Panc1 (cell line): ENCODE measurements at regions of chr2 and their contacts with region 1.

Region 1: DNA sequence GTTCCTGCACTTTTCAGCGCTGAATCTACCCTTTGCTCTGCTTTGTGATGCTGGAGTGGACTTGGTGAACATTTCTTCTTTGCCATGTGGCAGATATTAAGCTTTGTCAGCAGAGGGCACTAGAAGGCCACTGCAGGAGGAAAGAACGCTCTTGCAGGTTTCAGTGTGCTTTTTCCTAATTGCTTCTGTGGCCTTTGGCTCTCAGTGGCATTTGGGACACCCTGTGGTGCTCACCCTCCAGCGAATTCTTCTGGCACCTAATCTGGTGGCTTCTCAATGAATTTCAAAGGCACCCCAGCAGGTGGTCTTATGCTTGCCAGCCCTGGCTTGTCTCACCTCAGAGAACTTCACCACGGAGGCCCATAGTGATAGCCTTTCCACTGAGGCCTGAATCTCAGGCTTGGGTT is 146.7 kb downstream of the MYO3B start:
- DNase-seq: peak; percentile 27
- ATAC-seq: peak; percentile 87
- H3K4me3 ChIP-seq: no peak overlapping the region
- H3K27ac ChIP-seq: no peak overlapping the region
- H3K4me1 ChIP-seq: no peaks in the 10 kb centered on the region
- H3K27me3 ChIP-seq: no peaks in the 10 kb centered on the region
- CTCF ChIP-seq: peak; percentile 94

Region 2: DNA sequence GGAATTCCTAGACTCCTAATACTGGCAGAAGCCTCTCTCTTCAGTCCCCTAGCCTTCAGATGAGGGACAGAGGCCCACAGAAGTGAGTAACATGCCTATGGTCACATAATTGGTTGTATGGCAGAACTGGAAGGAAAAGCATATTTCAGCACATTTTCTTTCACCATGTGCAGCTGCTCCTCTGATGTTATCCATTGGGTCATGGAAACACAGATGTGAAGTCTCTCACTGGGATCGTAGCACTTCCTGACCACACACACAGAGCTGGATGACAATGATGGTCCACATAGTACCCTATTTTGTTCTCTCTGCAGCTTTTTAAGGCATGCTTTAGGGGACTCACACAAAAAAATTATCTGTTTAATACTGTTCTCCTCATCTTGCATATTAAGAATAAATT is 122.2 kb before region 1 on chr2:
- CTCF ChIA-PET with region 1: no interaction called
- POLR2A ChIA-PET with region 1: no interaction called
- in situ Hi-C with region 1: no loop called
- intact Hi-C with region 1: no loop called
- DNase-seq: no peak
- ATAC-seq: no peak
- H3K4me3 ChIP-seq: no peak overlapping the region
- H3K27ac ChIP-seq: no peak overlapping the region
- H3K4me1 ChIP-seq: no peaks in the 10 kb centered on the region
- H3K27me3 ChIP-seq: no peaks in the 10 kb centered on the region
- CTCF ChIP-seq: no peak

Region 3: GRCh38 chr2:170361090-170361936 is 36.7 kb after region 1 on chr2:
- CTCF ChIA-PET with region 1: interaction called, 3 read pairs
- POLR2A ChIA-PET with region 1: no interaction called
- in situ Hi-C with region 1: no loop called
- intact Hi-C with region 1: loop called (anchors 2 kb)
- DNase-seq: peak; percentile 15
- ATAC-seq: peak; percentile 95
- H3K4me3 ChIP-seq: no peak overlapping the region
- H3K27ac ChIP-seq: no peak overlapping the region
- H3K4me1 ChIP-seq: no peaks in the 10 kb centered on the region; the same call in 1 of the 2 replicates
- H3K27me3 ChIP-seq: peaks cover 14% of the 10 kb centered on the region
- CTCF ChIP-seq: peak; percentile 87

Region 4: DNA sequence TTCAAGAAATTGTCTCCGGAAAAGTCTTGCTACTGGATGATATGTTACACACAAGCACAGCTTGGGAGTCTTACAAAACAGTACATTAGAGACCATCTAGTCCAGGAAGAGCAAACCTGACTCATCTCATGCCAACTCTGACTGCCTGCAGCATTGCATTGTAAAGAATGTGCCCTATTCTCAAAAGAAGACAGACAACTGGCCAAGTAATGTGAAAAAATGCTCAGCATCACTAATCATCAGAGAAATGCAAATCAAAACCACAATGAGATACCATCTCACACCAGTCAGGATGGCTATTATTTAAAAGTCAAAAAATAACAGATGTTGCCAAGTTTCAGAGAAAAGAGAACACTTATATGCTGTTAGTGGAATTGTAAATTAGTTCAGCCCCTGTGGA is 561.7 kb after region 1 on chr2:
- CTCF ChIA-PET with region 1: no interaction called
- POLR2A ChIA-PET with region 1: no interaction called
- in situ Hi-C with region 1: no loop called
- intact Hi-C with region 1: no loop called
- DNase-seq: no peak
- ATAC-seq: no peak
- H3K4me3 ChIP-seq: no peak overlapping the region
- H3K27ac ChIP-seq: no peak overlapping the region
- H3K4me1 ChIP-seq: no peaks in the 10 kb centered on the region
- H3K27me3 ChIP-seq: peaks cover 9% of the 10 kb centered on the region; the same call in 1 of the 2 replicates
- CTCF ChIP-seq: no peak